Activated naive CD8-positive, alpha-beta T cell treated with anti-CD3 and anti-CD28 coated beads, Interleukin-2, amount 10 ng/mL, durations not matched to agents 7 days and 5 days (primary cell): ENCODE measurements at regions of chr11 and their contacts with region 1.

Region 1: GRCh38 chr11:62855571-62856332 is 16.4 kb upstream of the WDR74 start:
- DNase-seq: peak; percentile 99
- ATAC-seq: peak; percentile 89
- H3K4me3 Mint-ChIP-seq: peak overlapping the region; percentile 96
- H3K27ac Mint-ChIP-seq: peak overlapping the region; percentile 98
- H3K4me1 Mint-ChIP-seq: peaks cover 45% of the 10 kb centered on the region
- H3K27me3 Mint-ChIP-seq: no peaks in the 10 kb centered on the region

Region 2: GRCh38 chr11:62705880-62706849 is 149.6 kb before region 1 on chr11:
- POLR2A ChIA-PET with region 1: interaction called, 27 read pairs
- DNase-seq: peak; percentile 95
- ATAC-seq: peak; percentile 43
- H3K4me3 Mint-ChIP-seq: peak overlapping the region; percentile 91
- H3K27ac Mint-ChIP-seq: peak overlapping the region; percentile 73
- H3K4me1 Mint-ChIP-seq: peaks cover 39% of the 10 kb centered on the region
- H3K27me3 Mint-ChIP-seq: no peaks in the 10 kb centered on the region

Region 3: GRCh38 chr11:62771144-62772021 is 84.4 kb before region 1 on chr11 and contains the start of gene TAF6L:
- POLR2A ChIA-PET with region 1: interaction called, 20 read pairs
- DNase-seq: peak; percentile 95
- ATAC-seq: peak; percentile 83
- H3K4me3 Mint-ChIP-seq: peak within 1 kb of the TSS; percentile 92
- H3K27ac Mint-ChIP-seq: peak within 1 kb of the TSS; percentile 94
- H3K4me1 Mint-ChIP-seq: peaks cover 13% of the 10 kb centered on the region
- H3K27me3 Mint-ChIP-seq: no peaks in the 10 kb centered on the region
- total RNA-seq, gene TAF6L: 20.6 to 22.2 TPM

Region 4: DNA sequence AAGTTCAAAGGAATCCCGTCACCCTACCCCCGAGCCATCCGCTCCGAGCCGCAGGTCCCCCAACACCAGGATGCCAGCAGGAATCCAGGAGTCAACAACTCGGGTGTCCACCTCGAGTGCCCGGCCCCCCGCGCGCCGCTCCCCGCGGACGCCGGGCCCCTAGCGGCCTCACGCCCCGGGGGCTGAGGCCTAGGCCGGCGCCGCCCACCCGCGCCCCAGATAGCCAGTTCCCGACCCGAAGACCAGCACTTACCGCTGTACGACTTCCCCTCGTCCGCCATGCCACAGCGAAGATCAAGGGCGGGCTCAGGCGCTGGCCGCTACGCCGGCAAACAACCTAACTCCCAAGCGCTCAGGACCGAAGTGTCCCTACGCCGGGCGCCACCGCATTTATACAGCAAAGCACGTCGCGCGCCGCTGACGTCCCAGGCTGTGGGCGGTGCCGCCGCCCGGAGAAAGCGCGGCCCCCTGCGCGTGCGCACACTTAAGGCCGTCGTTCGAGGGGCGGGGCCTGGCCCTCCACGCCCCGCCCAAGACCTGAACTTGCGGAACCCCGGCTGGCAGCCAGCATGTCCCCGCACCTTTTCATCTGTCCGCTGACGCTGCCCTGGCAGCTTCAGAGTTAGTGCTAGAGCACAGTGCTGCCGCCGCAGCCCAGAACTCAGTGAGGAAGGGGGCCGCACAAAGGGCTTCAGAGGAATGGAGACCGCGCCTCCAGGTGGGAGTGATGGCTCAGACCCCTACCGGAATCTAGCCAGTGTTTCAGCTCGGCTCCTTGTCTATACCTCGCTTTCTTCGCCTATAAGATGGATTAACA is 50.5 kb before region 1 on chr11 and contains the start of gene NXF1:
- POLR2A ChIA-PET with region 1: interaction called, 30 read pairs
- DNase-seq: peak; percentile 100
- ATAC-seq: peak; percentile 83
- H3K4me3 Mint-ChIP-seq: peak within 1 kb of the TSS; percentile 99
- H3K27ac Mint-ChIP-seq: peak within 1 kb of the TSS; percentile 99
- H3K4me1 Mint-ChIP-seq: peaks cover 33% of the 10 kb centered on the region
- H3K27me3 Mint-ChIP-seq: no peaks in the 10 kb centered on the region
- total RNA-seq, gene NXF1: 124 to 131 TPM

Region 5: GRCh38 chr11:62880803-62881578 is 25.2 kb after region 1 on chr11 and contains the start of gene SLC3A2:
- POLR2A ChIA-PET with region 1: interaction called, 117 read pairs
- DNase-seq: peak; percentile 93
- ATAC-seq: peak; percentile 83
- H3K4me3 Mint-ChIP-seq: peak within 1 kb of the TSS; percentile 100
- H3K27ac Mint-ChIP-seq: peak within 1 kb of the TSS; percentile 100
- H3K4me1 Mint-ChIP-seq: peaks cover 40% of the 10 kb centered on the region
- H3K27me3 Mint-ChIP-seq: no peaks in the 10 kb centered on the region
- total RNA-seq, gene SLC3A2: 222 to 228 TPM

Region 6: DNA sequence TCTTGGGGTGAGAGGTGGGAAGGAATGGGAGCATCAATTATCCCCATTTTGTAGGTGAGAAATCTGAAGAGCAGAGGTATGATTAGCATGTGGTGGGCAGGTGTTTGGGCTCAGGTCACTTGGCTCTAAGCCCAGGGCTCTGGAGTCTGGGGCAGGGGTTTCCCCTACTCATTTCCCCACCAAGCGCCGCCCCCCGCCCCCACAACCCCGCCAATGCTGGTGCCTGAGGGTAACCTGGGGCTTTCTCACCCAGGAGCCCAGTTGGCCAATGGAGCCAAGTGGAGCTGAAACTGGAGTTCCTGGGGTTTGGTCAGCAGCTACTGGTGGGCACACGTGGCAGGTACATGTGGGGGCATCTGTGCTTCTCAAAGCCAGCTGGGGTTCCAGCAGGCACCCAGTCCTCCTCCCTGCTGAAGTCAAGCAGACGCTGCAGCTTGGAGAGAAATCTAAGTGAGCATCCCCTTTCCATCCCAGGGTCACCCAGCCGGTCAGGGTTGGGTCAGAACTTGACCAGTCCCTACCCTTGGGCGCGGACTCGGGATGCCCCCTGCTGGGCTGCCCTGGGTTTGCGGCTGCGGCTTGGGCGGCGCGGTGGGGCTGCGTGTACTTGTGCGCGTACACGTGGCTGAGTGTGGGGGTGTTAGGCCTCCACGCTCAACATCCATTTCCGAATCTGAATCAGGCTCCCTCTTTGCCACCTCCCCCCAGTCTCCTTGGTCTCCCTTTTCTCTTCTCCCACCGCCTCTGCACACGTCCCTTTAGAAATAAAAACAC is 67.1 kb after region 1 on chr11:
- POLR2A ChIA-PET with region 1: no interaction called
- DNase-seq: peak; percentile 48
- ATAC-seq: peak; percentile 20
- H3K4me3 Mint-ChIP-seq: no peak overlapping the region
- H3K27ac Mint-ChIP-seq: no peak overlapping the region
- H3K4me1 Mint-ChIP-seq: peaks cover 12% of the 10 kb centered on the region
- H3K27me3 Mint-ChIP-seq: peaks cover 73% of the 10 kb centered on the region